Activated CD4-positive, alpha-beta T cell treated with anti-CD3 and anti-CD28 coated beads, Interleukin-2, amount 10 ng/mL, durations not matched to agents 24 days and 14 days (primary cell): ENCODE measurements at regions of chr10 and their contacts with region 1.

Region 1: DNA sequence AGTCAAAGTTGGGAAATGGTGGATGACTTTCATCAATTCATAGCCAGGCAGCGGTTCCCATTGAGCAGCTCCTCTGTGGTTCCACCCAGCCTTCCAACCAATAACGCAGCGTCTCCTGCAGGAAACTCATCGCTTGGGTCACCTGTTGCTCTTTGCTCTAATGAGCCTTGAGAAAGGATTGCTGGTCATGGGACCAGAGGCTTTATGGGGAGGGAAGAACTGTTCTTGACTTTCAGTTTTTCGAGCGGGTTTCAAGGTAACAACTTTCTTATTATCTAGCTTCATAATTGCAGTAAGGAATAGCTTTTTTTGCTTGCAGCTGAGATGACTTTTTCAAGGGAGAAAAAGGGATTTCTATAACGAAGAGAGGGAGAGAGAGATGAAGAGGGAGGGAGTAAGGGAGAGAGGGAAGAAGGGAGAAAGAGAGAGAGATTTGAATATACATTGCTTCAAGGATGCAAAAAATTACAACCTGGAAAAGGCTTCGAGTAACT is 405 bp upstream of the ENTPD1 start:
- DNase-seq: no peak
- H3K4me3 Mint-ChIP-seq: peak overlapping the region; percentile 80
- H3K27ac Mint-ChIP-seq: peak overlapping the region; percentile 74
- H3K4me1 Mint-ChIP-seq: peaks cover 29% of the 10 kb centered on the region
- H3K27me3 Mint-ChIP-seq: peaks cover 11% of the 10 kb centered on the region

Region 2: DNA sequence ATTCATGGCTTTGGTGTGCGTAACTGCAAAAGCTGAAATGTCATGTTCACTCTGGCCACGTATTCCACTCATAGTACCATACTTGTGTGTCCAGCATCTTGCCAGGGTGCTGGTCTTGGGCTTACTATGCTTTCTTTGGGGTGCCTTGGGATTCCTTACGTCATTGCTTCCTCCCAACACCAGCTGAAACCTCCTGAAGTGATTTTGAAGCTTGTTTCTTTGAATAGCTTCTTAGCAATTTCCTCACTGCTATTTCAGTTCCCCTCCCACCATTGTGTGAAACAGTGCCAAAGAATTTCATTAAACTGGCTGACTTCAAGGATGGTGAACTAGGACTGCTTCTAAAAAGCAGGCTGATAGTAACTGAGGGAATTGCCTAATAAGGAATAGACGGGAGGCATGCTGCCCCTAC is 37.3 kb after region 1 on chr10:
- intact Hi-C with region 1: loop called (anchors 1 kb)
- DNase-seq: no peak
- H3K4me3 Mint-ChIP-seq: no peak overlapping the region
- H3K27ac Mint-ChIP-seq: peak overlapping the region; percentile 54
- H3K4me1 Mint-ChIP-seq: peaks cover 53% of the 10 kb centered on the region
- H3K27me3 Mint-ChIP-seq: no peaks in the 10 kb centered on the region

Region 3: DNA sequence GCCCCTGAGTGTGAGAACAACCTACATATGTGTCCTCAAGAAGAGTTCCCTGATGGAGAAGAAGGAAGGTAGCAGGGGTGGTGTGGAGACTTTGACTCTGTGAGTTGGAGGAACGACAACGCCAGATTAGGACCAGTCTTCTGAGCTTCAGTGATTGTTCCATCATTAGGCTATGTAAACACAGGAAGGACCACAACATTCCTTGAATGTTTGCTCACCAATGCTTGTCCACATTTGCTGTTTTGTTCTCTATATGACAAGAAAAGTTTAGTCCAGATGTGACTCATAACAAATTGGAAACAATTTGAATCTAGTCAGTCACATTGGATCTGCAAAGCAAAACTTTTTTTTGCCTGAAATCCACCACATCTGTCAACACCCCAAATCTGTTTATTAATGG is 63.1 kb after region 1 on chr10:
- intact Hi-C with region 1: loop called (anchors 2 kb)
- DNase-seq: no peak
- H3K4me3 Mint-ChIP-seq: no peak overlapping the region
- H3K27ac Mint-ChIP-seq: peak overlapping the region; percentile 72
- H3K4me1 Mint-ChIP-seq: peaks cover 37% of the 10 kb centered on the region
- H3K27me3 Mint-ChIP-seq: no peaks in the 10 kb centered on the region

Region 4: DNA sequence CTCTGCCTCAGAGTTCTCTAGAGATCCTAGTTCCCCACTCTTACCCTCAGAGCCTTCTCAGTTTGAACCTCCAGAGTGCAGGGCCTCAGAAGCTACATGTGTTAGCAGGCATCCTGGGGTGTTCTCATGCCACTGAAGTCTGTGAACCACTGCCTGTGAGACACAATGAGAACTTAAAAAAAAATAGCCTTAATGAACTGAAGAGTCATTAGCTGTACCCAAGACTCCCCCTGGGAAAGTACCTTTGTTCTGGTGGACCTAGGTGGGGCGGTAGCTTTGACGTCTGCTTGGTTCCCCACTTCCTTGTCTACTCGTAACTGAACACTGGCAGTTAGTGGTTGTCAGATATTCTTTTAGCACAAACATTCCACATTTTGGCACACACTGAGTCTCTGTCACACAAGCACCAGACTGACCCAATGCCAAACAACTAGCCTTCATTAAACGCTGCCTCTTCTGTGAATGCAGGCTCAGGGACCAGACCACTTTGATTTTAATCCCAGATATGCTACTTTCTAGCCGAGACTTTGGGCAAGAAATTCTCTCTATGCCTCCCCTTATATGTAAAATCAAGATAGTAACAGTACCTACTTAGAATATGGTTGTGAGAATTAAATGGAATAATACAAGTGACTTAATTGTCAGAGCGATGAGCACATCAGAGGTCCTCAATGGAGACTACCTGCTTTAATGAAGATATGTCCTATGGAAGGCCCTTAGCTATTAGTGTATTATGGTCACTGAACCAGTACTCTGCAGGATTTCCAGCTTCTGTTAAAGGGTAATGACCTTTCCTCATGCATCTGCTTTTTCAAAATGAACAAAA is 76.9 kb after region 1 on chr10:
- intact Hi-C with region 1: loop called (anchors 1 kb)
- DNase-seq: peak; percentile 91
- H3K4me3 Mint-ChIP-seq: peak overlapping the region; percentile 73
- H3K27ac Mint-ChIP-seq: peak overlapping the region; percentile 98
- H3K4me1 Mint-ChIP-seq: peaks cover 56% of the 10 kb centered on the region
- H3K27me3 Mint-ChIP-seq: no peaks in the 10 kb centered on the region

Region 5: GRCh38 chr10:95864906-95865813 is 109.6 kb after region 1 on chr10:
- intact Hi-C with region 1: loop called (anchors 1 kb)
- DNase-seq: peak; percentile 88
- H3K4me3 Mint-ChIP-seq: peak overlapping the region; percentile 22
- H3K27ac Mint-ChIP-seq: peak overlapping the region; percentile 71
- H3K4me1 Mint-ChIP-seq: peaks cover 30% of the 10 kb centered on the region
- H3K27me3 Mint-ChIP-seq: no peaks in the 10 kb centered on the region